MCF 10A (cell line): ENCODE measurements at regions of chr1 and their contacts with region 1.

Region 1: GRCh38 chr1:165827268-165828102 is at the start of gene UCK2:
- DNase-seq: peak; percentile 86
- H3K4me3 Mint-ChIP-seq: peak within 1 kb of the TSS; percentile 96
- H3K27ac Mint-ChIP-seq: peak within 1 kb of the TSS; percentile 90
- H3K4me1 Mint-ChIP-seq: peaks cover 25% of the 10 kb centered on the region
- H3K27me3 Mint-ChIP-seq: no peaks in the 10 kb centered on the region
- CTCF ChIP-seq: peak; percentile 6
- total RNA-seq, gene UCK2: 108 and 144 TPM in 2 replicates

Region 2: DNA sequence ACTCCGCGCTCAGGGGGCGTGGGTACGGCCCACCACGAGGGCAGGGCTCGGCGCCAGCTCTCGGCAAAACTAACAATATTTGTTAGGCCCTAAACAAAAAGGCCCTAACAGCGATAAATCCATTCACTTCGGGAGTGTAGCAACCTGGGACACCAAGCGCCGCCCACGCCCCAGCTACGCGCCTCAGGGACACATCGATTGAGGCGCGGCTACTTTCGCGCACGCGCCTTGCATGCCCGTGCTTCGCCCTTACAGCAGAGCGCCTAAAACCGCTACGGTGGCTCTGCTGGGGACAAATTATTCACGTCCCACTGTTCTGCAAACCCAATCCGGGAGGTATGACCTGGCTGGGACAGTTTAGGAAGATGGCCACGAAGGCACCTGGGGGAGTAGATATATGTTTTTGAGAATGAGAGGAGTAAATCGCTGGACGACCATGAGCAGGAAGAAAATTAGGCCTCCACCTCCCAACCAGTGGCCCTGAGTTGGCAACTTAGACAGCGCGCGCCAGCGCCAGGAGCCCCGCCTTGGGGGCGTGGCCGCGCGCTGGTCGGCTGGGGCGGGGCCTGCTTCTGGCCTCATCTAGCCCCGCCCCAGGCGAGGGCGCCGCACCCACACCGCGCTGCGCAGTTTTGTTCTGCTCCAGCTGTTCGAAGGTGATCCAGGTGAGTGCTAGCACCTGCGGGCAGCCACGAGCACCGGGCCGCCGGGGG is 196.7 kb before region 1 on chr1 and contains the start of gene MGST3:
- CTCF ChIA-PET with region 1: interaction called, 4 read pairs
- POLR2A ChIA-PET with region 1: interaction called, 31 read pairs
- intact Hi-C with region 1: loop called (anchors 2 kb)
- DNase-seq: peak; percentile 99
- H3K4me3 Mint-ChIP-seq: no peak within 1 kb of the TSS
- H3K27ac Mint-ChIP-seq: no peak within 1 kb of the TSS
- H3K4me1 Mint-ChIP-seq: peaks cover 22% of the 10 kb centered on the region
- H3K27me3 Mint-ChIP-seq: no peaks in the 10 kb centered on the region
- CTCF ChIP-seq: no peak
- total RNA-seq, gene MGST3: 75.5 and 97.1 TPM in 2 replicates

Region 3: DNA sequence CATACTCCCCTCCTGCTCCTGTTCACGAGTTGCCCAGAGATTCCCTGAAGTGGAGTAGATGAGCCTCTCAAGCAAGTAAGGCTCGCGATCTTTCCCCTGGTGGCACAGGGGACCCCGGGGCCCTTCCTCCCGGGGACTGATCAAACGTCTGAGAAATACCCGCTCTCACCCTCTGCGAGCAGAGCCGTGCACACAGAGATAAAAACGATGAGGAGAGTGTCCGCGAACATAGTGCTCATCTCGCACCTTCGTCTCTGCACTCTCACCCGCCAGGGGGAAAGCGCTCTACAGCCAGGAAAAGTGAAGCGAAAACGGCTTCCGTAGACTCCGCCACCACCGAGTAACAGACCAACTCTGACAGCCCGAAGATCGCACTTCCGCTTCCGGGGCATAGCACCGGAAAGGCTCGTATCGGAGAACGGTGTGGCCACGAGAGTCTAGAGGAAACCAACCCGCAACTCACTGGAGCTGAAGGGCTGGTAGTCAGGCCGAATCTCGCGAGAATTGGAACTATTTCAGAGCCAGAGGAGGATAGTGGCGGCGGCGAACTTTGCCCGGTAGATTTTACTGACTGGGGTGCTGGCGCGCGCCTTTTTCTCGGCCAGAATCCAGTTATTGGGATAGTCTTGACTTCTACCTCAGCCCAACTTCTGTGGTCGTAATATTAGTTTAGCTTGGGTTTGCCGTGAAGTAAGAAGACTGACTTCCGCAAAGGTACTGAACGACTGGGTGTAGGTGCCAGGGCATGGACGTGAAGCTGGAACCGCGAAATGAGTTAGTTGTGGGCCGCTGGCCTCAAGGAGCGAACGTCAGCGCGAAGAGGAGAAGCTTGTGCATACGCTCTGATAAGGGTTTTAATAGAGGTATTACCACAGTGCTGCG is 58.7 kb before region 1 on chr1 and contains the start of gene TMCO1:
- CTCF ChIA-PET with region 1: interaction called, 17 read pairs
- POLR2A ChIA-PET with region 1: interaction called, 118 read pairs
- intact Hi-C with region 1: loop called (anchors 1 kb)
- DNase-seq: peak; percentile 100
- H3K4me3 Mint-ChIP-seq: peak within 1 kb of the TSS; percentile 95
- H3K27ac Mint-ChIP-seq: peak within 1 kb of the TSS; percentile 98
- H3K4me1 Mint-ChIP-seq: peaks cover 46% of the 10 kb centered on the region
- H3K27me3 Mint-ChIP-seq: no peaks in the 10 kb centered on the region
- CTCF ChIP-seq: no peak
- total RNA-seq, gene TMCO1: 158 and 202 TPM in 2 replicates

Region 4: DNA sequence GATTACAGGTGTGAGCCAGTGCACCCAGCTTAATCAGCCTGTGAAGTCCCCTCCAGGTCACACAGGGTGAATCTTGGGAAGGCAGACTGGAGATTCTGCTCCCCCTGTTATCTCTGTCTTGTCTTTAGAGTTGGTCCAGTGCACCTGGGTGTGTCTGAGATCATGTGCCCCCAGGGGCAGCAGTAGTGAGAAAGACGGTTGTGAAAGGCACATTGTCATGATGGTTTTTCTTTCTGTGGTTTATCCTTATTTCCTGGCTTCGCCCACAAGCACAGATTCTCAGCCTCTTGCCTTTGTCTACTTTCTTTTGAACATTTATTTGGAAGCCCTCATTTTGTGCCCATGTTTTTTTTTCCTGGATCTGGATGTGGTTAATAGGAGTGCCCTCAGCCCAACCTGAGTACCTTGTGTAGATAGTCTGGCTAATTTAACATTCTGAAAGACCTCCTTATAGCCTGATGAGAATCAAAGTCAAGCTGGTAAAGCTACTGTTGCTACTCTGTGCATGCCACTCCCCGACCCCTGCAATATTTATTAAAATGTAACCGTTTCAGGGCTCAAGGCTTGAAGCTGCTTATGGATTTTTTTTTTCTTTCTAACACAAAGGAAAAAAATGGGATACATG is 23.7 kb after region 1 on chr1:
- CTCF ChIA-PET with region 1: interaction called, 10 read pairs
- POLR2A ChIA-PET with region 1: interaction called, 16 read pairs
- intact Hi-C with region 1: loop called (anchors 2 kb)
- DNase-seq: peak; percentile 94
- H3K4me3 Mint-ChIP-seq: no peak overlapping the region
- H3K27ac Mint-ChIP-seq: peak overlapping the region; percentile 61
- H3K4me1 Mint-ChIP-seq: peaks cover 51% of the 10 kb centered on the region
- H3K27me3 Mint-ChIP-seq: no peaks in the 10 kb centered on the region
- CTCF ChIP-seq: no peak

Region 5: DNA sequence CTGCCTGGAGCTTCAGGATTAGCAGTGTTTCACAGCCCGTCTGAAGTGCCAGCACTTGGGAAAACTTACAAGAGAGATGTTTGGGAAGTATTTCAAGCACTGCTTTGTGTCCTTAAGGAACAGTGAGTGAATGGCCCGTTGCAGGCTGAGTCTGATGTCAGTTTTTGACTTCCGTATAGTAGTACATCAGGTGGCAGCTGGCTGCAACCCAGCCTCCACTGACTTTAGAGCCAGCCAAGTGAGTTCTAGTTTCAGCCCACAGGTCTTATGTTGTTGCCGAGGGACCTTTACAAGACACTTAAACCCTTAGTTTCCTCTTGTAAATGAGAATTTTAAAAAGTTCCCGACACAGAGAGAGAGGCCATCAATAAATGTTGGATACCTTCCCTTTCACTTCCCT is 35.0 kb after region 1 on chr1:
- CTCF ChIA-PET with region 1: interaction called, 9 read pairs
- POLR2A ChIA-PET with region 1: interaction called, 16 read pairs
- intact Hi-C with region 1: no loop called
- DNase-seq: no peak
- H3K4me3 Mint-ChIP-seq: no peak overlapping the region
- H3K27ac Mint-ChIP-seq: peak overlapping the region; percentile 1
- H3K4me1 Mint-ChIP-seq: peaks cover 58% of the 10 kb centered on the region
- H3K27me3 Mint-ChIP-seq: no peaks in the 10 kb centered on the region
- CTCF ChIP-seq: no peak

Region 6: GRCh38 chr1:165884690-165885304 is 57.3 kb after region 1 on chr1:
- CTCF ChIA-PET with region 1: interaction called, 5 read pairs
- POLR2A ChIA-PET with region 1: interaction called, 19 read pairs
- intact Hi-C with region 1: no loop called
- DNase-seq: no peak
- H3K4me3 Mint-ChIP-seq: no peak overlapping the region
- H3K27ac Mint-ChIP-seq: peak overlapping the region; percentile 32
- H3K4me1 Mint-ChIP-seq: peaks cover 70% of the 10 kb centered on the region
- H3K27me3 Mint-ChIP-seq: no peaks in the 10 kb centered on the region
- CTCF ChIP-seq: no peak

Region 7: DNA sequence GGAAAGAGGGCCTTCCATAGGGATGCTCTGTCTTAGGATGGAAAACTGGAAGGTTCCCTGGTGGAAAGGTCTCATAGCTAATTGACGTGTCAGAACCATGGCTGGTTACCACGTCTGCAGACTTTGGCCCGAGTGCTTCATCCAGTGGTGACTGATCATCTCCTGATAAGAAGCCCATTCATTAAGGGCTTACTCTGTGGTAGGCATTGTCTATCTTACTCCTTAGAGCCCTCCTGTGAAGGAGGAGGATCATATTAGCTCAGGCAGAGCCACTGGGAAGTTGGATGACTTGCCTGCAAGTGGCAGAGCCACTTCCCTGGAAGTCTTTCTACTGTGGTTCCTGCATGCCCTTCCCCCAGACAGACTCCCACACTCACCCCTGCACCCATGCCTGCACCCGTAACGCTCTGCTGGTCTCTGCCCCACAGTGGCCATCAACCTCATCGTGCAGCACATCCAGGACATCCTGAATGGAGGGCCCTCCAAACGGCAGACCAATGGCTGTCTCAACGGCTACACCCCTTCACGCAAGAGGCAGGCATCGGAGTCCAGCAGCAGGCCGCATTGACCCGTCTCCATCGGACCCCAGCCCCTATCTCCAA is 79.9 kb after region 1 on chr1:
- CTCF ChIA-PET with region 1: interaction called, 36 read pairs
- POLR2A ChIA-PET with region 1: interaction called, 106 read pairs
- intact Hi-C with region 1: no loop called
- DNase-seq: no peak
- H3K4me3 Mint-ChIP-seq: no peak overlapping the region
- H3K27ac Mint-ChIP-seq: no peak overlapping the region
- H3K4me1 Mint-ChIP-seq: peaks cover 18% of the 10 kb centered on the region
- H3K27me3 Mint-ChIP-seq: no peaks in the 10 kb centered on the region
- CTCF ChIP-seq: no peak

Region 8: DNA sequence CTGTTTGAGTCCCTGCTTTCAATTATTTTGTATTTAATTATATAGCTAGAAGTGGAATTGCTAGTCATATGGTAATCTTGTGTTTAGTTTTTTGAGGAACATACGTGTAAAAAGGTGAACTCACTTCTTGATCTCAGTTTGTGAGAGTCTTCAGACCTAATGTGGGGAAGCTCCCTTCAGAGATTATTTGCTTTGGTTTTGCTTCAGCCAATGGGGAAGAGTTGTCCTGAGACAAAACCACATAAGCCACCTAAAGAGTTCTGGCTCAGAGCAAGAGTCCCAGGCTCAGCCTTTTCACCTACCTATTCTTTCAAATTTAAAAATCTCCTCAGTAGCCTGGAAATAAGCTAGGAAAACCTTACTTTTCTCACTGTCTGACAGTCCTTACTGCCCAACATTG is 138.4 kb after region 1 on chr1:
- CTCF ChIA-PET with region 1: no interaction called
- POLR2A ChIA-PET with region 1: no interaction called
- intact Hi-C with region 1: no loop called
- DNase-seq: no peak
- H3K4me3 Mint-ChIP-seq: no peak overlapping the region
- H3K27ac Mint-ChIP-seq: no peak overlapping the region
- H3K4me1 Mint-ChIP-seq: no peaks in the 10 kb centered on the region
- H3K27me3 Mint-ChIP-seq: peaks cover 11% of the 10 kb centered on the region
- CTCF ChIP-seq: no peak

Region 9: GRCh38 chr1:166053395-166053794 is 225.9 kb after region 1 on chr1:
- CTCF ChIA-PET with region 1: no interaction called
- POLR2A ChIA-PET with region 1: no interaction called
- intact Hi-C with region 1: no loop called
- DNase-seq: no peak
- H3K4me3 Mint-ChIP-seq: no peak overlapping the region
- H3K27ac Mint-ChIP-seq: no peak overlapping the region
- H3K4me1 Mint-ChIP-seq: no peaks in the 10 kb centered on the region
- H3K27me3 Mint-ChIP-seq: peaks cover 11% of the 10 kb centered on the region
- CTCF ChIP-seq: no peak